Esophagus muscularis mucosa (tissue), 4 donors: ENCODE measurements at regions of chr19 and their contacts with region 1.

Region 1: DNA sequence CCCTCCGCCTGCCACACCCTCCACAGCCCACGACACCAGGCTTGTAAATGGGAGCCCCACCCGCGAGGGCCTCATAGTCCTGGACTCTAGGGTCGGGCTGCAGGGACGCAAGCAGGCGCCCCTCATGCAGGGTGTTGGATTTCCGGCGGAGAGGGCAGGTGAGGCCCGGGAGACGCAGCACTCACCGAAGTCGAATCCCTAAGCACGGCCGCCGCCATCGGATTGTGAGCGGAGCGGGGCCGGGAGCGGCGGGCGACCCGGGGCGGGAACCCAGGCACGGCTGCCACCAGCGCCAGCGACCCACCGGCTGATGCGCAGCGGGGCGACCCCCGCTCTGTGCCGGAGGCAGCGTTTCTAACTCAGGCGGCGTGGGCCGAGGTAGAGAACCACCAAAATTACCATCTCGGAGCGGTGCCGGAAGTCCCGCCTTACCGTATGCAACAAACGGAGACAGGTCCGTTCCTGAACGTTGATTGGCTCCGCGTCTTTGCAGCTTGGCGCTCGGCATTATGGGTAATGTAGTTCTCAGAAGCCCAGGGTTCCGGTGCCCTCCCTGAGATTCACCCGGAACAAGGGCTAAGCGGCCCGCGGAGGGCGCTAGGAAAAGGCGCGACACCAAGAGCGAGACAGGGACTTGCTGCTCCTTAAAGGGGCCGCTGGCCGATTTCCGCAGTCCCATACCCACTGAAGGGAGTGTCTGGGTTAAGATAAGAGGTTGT is at the start of gene ZNF416:
- DNase-seq: peak; percentile 99
- H3K4me3 ChIP-seq: peak within 1 kb of the TSS; percentile 76 to 100 (median 98)
- H3K27ac ChIP-seq: peak within 1 kb of the TSS; percentile 66 to 83 (median 80)
- H3K4me1 ChIP-seq: peaks cover 18 to 25% (median 24%) of the 10 kb centered on the region in 4 donors
- H3K27me3 ChIP-seq: no peaks in the 10 kb centered on the region
- CTCF ChIP-seq: peak; percentile 19 to 27 (median 22)
- EP300 ChIP-seq: no peak
- POLR2A ChIP-seq: no peak
- total RNA-seq, gene ZNF416: 3.3 to 6.0 (median 4.9) TPM

Region 2: DNA sequence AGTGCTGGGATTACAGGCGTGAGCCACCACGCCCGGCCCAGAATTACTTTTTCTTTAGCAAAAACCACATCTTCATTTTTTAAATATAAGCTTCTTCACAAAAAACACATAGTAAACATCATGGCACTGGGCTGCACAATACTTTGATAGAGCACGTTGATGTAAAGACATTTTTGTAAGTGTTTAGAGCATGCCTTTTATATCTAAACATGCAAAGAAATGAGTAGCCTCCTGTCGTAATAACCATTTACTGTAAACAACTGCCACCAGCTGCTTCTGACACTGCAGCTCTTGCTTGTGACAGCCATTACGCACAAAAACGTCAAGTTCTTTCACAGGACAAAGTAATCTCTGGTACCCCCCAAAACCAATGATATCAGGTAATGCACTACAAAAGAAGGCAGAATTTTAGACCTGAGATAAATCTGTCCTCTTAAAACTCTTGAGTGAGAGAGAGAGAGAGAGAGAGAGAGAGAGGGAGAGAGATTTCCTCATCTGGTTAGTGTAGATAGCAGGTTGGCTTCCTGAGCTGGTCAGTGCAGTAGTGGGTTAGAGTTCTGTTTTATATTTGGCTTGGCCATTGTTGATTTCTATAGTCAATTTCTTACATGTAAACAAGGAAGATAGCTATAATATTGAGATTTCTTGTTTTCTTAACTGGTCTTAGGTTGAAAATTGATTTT is 195.7 kb before region 1 on chr19:
- intact Hi-C with region 1: no loop called
- DNase-seq: no peak
- H3K4me3 ChIP-seq: no peak overlapping the region
- H3K27ac ChIP-seq: no peak overlapping the region
- H3K4me1 ChIP-seq: no peaks in the 10 kb centered on the region
- H3K27me3 ChIP-seq: no peaks in the 10 kb centered on the region
- CTCF ChIP-seq: no peak
- EP300 ChIP-seq: no peak
- POLR2A ChIP-seq: no peak

Region 3: GRCh38 chr19:57632987-57633831 is 54.6 kb after region 1 on chr19 and contains the start of gene ZNF211:
- intact Hi-C with region 1: loop called (anchors 5 kb)
- DNase-seq: peak; percentile 98
- H3K4me3 ChIP-seq: peak within 1 kb of the TSS; percentile 65 to 92 (median 84)
- H3K27ac ChIP-seq: peak within 1 kb of the TSS; percentile 80 to 90 (median 84)
- H3K4me1 ChIP-seq: peaks cover 9 to 19% (median 13%) of the 10 kb centered on the region in 4 donors
- H3K27me3 ChIP-seq: no peaks in the 10 kb centered on the region
- CTCF ChIP-seq: peak in 1 of 3 experiments; percentile 8
- EP300 ChIP-seq: no peak
- POLR2A ChIP-seq: no peak
- total RNA-seq, gene ZNF211: 9.4 to 14.8 (median 11.0) TPM